AG04449 (cell line): ENCODE measurements at regions of chr11 and their contacts with region 1.

Region 1: DNA sequence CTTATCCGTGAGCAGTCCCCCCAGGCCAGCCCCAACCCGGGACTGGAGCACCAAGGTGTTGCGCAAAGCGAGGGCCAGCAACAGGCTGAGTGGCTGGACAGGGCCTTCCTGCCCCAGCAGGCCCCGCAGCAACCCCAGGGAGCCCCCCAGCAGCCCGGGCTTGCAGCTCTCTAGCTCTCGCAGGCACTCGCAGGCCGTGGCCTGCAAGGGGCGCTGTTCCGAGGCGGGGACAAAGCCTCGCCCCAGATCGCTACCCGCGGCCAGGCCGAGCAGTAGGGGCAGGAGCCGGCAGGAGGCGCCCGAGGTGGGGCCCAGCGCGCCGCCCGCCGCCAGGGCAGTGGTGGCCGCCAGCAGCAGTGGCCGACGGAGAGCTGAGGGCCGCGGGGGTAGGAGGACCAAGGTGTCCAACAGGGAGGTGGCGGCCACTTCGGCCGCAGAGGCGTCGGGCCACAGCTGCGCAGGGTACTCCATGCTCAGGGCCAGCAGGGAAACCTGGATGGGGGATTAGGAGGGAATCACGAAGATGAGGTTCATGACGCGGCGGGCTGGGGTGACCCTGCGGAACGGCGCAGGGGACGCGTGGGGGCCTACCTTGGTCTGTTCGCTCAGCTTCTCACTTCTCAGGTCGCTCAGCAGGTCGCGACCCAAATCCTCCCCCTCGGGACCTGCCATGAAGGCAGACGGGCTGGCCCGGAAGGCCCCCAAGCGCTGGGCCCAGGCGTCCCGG is 762 bp downstream of the AP5B1 start:
- DNase-seq: no peak
- H3K4me3 ChIP-seq: peak overlapping the region; percentile 80
- CTCF ChIP-seq: peak; percentile 82

Region 2: GRCh38 chr11:65440831-65441499 is 339.0 kb before region 1 on chr11:
- CTCF ChIA-PET with region 1: no interaction called
- POLR2A ChIA-PET with region 1: no interaction called
- DNase-seq: no peak
- H3K4me3 ChIP-seq: no peak overlapping the region
- CTCF ChIP-seq: no peak

Region 3: DNA sequence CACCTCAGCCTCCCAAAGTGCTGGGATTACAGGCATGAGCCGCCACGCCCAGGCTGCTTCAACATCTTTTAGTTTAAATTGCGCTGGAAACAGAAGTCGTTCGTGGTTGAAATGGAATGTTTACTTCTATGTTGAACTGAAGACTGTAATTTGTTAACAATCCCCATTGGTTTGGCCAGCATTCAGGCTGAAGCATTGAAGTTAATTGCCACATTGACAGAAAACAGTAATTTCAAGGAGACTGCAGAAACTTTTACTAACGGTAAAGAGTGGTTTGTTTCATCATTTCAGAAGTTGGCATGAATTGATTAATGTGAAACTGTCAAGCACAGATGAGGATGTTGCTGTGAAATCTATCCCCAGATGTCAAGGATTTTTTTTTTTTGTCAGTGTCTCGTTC is 13.5 kb before region 1 on chr11:
- CTCF ChIA-PET with region 1: interaction called, 76 read pairs
- POLR2A ChIA-PET with region 1: no interaction called
- DNase-seq: peak; percentile 21
- H3K4me3 ChIP-seq: no peak overlapping the region
- CTCF ChIP-seq: no peak

Region 4: DNA sequence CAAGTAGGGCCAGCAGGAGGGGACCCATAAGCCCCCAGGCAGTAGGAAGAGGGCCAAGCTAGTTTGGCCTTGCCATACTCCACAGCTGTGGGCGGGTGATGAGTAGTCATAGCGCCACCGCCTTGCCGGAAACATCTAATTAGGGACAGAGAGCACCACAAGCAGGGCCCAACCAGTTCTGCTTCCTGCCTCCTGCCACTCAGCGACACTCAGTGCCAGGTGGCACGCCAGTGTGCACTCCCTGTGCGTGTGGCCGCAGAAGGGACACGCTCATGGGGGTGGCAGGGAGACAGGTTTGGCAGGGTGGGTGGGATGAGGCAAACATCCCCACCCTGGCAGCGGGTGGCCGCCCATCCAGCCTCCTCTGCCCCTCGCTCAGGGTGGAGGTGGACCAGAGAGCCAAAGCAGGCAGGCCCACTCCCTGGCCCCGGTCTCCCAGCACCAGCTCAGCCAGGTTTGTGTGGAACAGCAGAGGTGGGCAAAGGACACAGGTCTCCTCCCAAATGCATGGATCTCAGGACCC is 11.7 kb after region 1 on chr11:
- CTCF ChIA-PET with region 1: interaction called, 45 read pairs
- POLR2A ChIA-PET with region 1: no interaction called
- DNase-seq: no peak
- H3K4me3 ChIP-seq: no peak overlapping the region
- CTCF ChIP-seq: no peak

Region 5: GRCh38 chr11:65796726-65797601 is 16.9 kb after region 1 on chr11:
- CTCF ChIA-PET with region 1: interaction called, 45 read pairs
- POLR2A ChIA-PET with region 1: no interaction called
- DNase-seq: no peak
- H3K4me3 ChIP-seq: no peak overlapping the region
- CTCF ChIP-seq: no peak

Region 6: GRCh38 chr11:65810046-65810868 is 30.2 kb after region 1 on chr11:
- CTCF ChIA-PET with region 1: interaction called, 20 read pairs
- POLR2A ChIA-PET with region 1: no interaction called
- DNase-seq: no peak
- H3K4me3 ChIP-seq: no peak overlapping the region
- CTCF ChIP-seq: no peak

Region 7: DNA sequence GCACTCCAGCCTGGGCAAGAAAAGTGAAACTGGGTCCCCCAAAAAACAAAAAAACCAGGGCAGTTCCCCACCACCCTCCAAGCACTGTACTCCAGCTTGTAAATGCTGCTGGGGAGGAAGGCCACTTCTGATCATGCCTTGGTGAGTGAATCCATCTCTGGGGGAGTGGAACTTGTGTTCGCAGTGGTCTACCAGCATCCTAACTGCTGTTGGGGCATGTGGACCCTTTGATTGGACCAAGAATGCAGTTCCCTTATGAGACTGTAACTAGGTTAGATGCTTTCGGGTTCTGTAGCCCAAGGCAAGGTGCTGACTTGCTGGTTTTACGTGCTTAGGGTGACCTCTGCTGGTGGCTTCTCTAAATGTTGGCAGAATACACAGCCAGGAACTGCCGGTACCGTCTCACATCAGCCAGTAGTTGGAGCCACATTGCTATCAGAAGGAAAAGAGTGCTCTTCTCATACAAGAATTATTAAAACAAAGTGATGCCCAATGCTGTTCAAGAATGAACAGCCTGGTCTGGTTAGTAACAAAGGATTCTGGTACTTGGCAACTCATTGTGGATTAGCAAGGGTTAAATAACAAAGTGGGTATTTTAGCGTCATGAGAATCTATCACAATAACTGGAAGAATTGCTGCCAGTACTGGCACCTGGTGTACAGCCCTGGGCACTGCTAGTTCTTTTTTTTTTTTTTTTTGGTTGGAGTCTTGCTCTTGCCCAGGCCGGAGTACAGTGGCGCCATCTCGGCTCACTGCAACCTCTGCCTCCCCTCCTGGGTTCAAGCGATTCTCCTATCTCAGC is 209.0 kb after region 1 on chr11:
- CTCF ChIA-PET with region 1: interaction called, 11 read pairs
- POLR2A ChIA-PET with region 1: no interaction called
- DNase-seq: peak; percentile 79
- H3K4me3 ChIP-seq: no peak overlapping the region
- CTCF ChIP-seq: peak; percentile 94